CD8-positive, alpha-beta T cell (primary cell): ENCODE measurements at regions of chr6 and their contacts with region 1.

Region 1: DNA sequence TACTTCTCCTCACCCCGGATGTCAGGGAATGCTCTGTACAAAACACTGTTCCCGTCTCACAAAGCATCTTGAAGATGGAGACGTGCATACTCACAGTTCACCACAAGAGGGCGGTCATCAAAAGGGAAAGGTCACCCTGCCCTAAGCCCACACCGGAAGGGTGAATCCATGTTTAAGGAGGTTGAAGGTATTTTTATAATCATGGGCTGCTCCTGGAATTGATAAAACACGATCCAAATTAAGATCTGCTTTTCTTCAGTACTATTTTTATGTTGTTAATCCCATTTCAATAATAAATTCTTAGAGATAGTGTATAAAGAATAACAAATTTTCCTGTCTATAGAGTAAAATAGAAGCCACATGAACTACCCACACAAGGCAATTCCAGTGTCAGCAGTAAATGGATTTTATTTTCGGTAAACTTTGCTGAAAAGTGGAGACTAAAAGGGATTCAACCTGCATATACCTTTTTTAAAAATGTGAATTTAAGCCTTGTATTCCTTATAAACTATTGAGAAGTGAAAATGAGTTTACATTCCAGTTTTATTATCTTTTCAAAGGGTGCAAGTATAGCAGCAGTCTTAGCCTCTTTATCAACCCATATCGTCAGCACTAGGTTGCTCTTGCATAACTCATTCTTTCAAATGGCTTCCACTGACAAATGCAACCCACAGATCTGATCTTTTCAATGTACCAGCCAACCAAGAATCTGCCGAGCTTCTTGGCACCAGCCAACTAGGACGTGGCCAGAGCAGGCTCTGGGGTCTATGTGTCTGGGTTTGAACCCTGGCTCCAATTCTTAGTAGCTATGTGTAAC is 79.7 kb upstream of the MBOAT1 start:
- DNase-seq: peak; percentile 34 to 86 (median 77)
- ATAC-seq: peak; percentile 95
- H3K4me3 ChIP-seq: no peak overlapping the region
- H3K4me3 Mint-ChIP-seq: peak overlapping the region; percentile 26
- H3K27ac ChIP-seq: no peak overlapping the region
- H3K27ac Mint-ChIP-seq: peak overlapping the region; percentile 43
- H3K4me1 ChIP-seq: peaks cover 13% of the 10 kb centered on the region
- H3K4me1 Mint-ChIP-seq: peaks cover 24% of the 10 kb centered on the region
- H3K27me3 ChIP-seq: no peaks in the 10 kb centered on the region
- H3K27me3 Mint-ChIP-seq: no peaks in the 10 kb centered on the region
- CTCF ChIP-seq: peak; percentile 95

Region 2: GRCh38 chr6:20092071-20092566 is 199.9 kb before region 1 on chr6:
- CTCF ChIA-PET with region 1: interaction called, 5 read pairs
- POLR2A ChIA-PET with region 1: no interaction called
- intact Hi-C with region 1: loop called in 1 of 2 experiments (anchors 2 kb)
- DNase-seq: peak in 2 of 9 experiments; percentile 32 to 48
- ATAC-seq: no peak
- H3K4me3 ChIP-seq: no peak overlapping the region
- H3K4me3 Mint-ChIP-seq: no peak overlapping the region
- H3K27ac ChIP-seq: no peak overlapping the region
- H3K27ac Mint-ChIP-seq: no peak overlapping the region
- H3K4me1 ChIP-seq: no peaks in the 10 kb centered on the region
- H3K4me1 Mint-ChIP-seq: no peaks in the 10 kb centered on the region
- H3K27me3 ChIP-seq: no peaks in the 10 kb centered on the region
- H3K27me3 Mint-ChIP-seq: no peaks in the 10 kb centered on the region
- CTCF ChIP-seq: peak; percentile 45

Region 3: DNA sequence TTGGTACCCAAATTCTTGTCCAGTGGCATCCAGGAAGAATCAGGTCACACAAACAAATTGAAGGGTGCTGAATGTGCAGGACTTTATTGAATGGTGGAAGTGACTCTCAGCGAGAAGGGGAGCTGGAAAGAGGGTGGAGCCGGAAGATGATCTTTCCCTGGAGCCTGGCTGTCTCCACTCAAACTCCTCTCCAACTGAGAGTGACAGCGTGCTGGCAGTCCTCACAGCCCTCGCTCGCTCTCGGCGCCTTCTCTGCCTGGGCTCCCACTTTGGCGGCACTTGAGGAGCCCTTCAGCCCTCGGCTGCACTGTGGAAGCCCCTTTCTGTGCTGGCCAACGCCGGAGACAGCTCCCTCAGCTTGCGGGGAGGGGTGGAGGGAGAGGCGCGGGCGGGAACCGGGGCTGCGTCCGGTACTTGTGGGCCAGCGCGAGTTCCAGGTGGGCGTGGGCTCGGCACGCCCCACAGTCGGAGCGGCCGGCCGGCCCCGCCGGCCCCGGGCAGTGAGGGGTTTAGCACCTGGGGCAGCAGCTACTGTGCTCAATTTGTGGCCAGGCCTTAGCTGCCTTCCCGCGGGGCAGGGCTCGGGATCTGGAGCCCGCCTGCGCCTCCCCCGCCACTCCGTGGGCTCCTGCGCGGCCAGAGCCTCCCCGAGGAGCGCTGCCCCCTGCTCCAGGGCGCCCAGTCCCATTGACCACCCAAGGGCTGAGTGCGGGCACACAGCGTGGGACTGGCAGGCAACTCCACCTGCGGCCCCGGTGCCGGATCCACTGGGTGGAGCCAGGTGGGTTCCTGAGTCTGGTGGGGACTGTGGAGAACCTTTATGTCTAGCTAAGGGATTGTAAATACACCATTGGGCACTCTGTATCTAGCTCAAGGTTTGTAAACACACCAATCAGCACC is 53.0 kb before region 1 on chr6:
- CTCF ChIA-PET with region 1: no interaction called
- POLR2A ChIA-PET with region 1: no interaction called
- intact Hi-C with region 1: no loop called
- DNase-seq: no peak
- ATAC-seq: no peak
- H3K4me3 ChIP-seq: no peak overlapping the region
- H3K4me3 Mint-ChIP-seq: no peak overlapping the region
- H3K27ac ChIP-seq: no peak overlapping the region
- H3K27ac Mint-ChIP-seq: no peak overlapping the region
- H3K4me1 ChIP-seq: no peaks in the 10 kb centered on the region
- H3K4me1 Mint-ChIP-seq: peaks cover 13% of the 10 kb centered on the region
- H3K27me3 ChIP-seq: no peaks in the 10 kb centered on the region
- H3K27me3 Mint-ChIP-seq: no peaks in the 10 kb centered on the region
- CTCF ChIP-seq: no peak

Region 4: GRCh38 chr6:20279608-20280287 is 12.2 kb before region 1 on chr6:
- CTCF ChIA-PET with region 1: interaction called, 5 read pairs
- POLR2A ChIA-PET with region 1: interaction called, 12 read pairs
- intact Hi-C with region 1: no loop called
- DNase-seq: no peak
- ATAC-seq: no peak
- H3K4me3 ChIP-seq: no peak overlapping the region
- H3K4me3 Mint-ChIP-seq: no peak overlapping the region
- H3K27ac ChIP-seq: no peak overlapping the region
- H3K27ac Mint-ChIP-seq: no peak overlapping the region
- H3K4me1 ChIP-seq: no peaks in the 10 kb centered on the region
- H3K4me1 Mint-ChIP-seq: no peaks in the 10 kb centered on the region
- H3K27me3 ChIP-seq: no peaks in the 10 kb centered on the region
- H3K27me3 Mint-ChIP-seq: peaks cover 31% of the 10 kb centered on the region
- CTCF ChIP-seq: no peak

Region 5: GRCh38 chr6:20319520-20320357 is 27.8 kb after region 1 on chr6:
- CTCF ChIA-PET with region 1: interaction called, 11 read pairs
- POLR2A ChIA-PET with region 1: interaction called, 10 read pairs
- intact Hi-C with region 1: no loop called
- DNase-seq: peak; percentile 57 to 92 (median 76)
- ATAC-seq: peak; percentile 91
- H3K4me3 ChIP-seq: peak overlapping the region; percentile 46 to 61
- H3K4me3 Mint-ChIP-seq: peak overlapping the region; percentile 93
- H3K27ac ChIP-seq: peak overlapping the region; percentile 78 to 87
- H3K27ac Mint-ChIP-seq: peak overlapping the region; percentile 99
- H3K4me1 ChIP-seq: peaks cover 12% of the 10 kb centered on the region
- H3K4me1 Mint-ChIP-seq: peaks cover 21% of the 10 kb centered on the region
- H3K27me3 ChIP-seq: no peaks in the 10 kb centered on the region
- H3K27me3 Mint-ChIP-seq: no peaks in the 10 kb centered on the region
- CTCF ChIP-seq: no peak

Region 6: GRCh38 chr6:20366091-20366832 is 74.3 kb after region 1 on chr6:
- CTCF ChIA-PET with region 1: interaction called, 3 read pairs
- POLR2A ChIA-PET with region 1: interaction called, 3 read pairs
- intact Hi-C with region 1: loop called in 1 of 2 experiments (anchors 2 kb)
- DNase-seq: peak; percentile 17 to 89 (median 57)
- ATAC-seq: peak; percentile 77
- H3K4me3 ChIP-seq: peak overlapping the region in 1 of 2 experiments; percentile 10
- H3K4me3 Mint-ChIP-seq: peak overlapping the region; percentile 74
- H3K27ac ChIP-seq: peak overlapping the region; percentile 29 to 72
- H3K27ac Mint-ChIP-seq: peak overlapping the region; percentile 96
- H3K4me1 ChIP-seq: peaks cover 61% of the 10 kb centered on the region
- H3K4me1 Mint-ChIP-seq: peaks cover 65% of the 10 kb centered on the region
- H3K27me3 ChIP-seq: no peaks in the 10 kb centered on the region
- H3K27me3 Mint-ChIP-seq: no peaks in the 10 kb centered on the region
- CTCF ChIP-seq: no peak

Region 7: GRCh38 chr6:20455251-20455940 is 163.4 kb after region 1 on chr6:
- CTCF ChIA-PET with region 1: interaction called, 3 read pairs
- POLR2A ChIA-PET with region 1: interaction called, 3 read pairs
- intact Hi-C with region 1: loop called (anchors 2 to 5 kb)
- DNase-seq: no peak
- ATAC-seq: no peak
- H3K4me3 ChIP-seq: no peak overlapping the region
- H3K4me3 Mint-ChIP-seq: no peak overlapping the region
- H3K27ac ChIP-seq: no peak overlapping the region
- H3K27ac Mint-ChIP-seq: no peak overlapping the region
- H3K4me1 ChIP-seq: peaks cover 8% of the 10 kb centered on the region
- H3K4me1 Mint-ChIP-seq: peaks cover 45% of the 10 kb centered on the region
- H3K27me3 ChIP-seq: no peaks in the 10 kb centered on the region
- H3K27me3 Mint-ChIP-seq: no peaks in the 10 kb centered on the region
- CTCF ChIP-seq: no peak

Region 8: GRCh38 chr6:20534295-20535262 is 242.6 kb after region 1 on chr6 and contains the start of gene CDKAL1:
- CTCF ChIA-PET with region 1: interaction called, 18 read pairs
- POLR2A ChIA-PET with region 1: no interaction called
- intact Hi-C with region 1: loop called (anchors 1 kb)
- DNase-seq: peak; percentile 73 to 94 (median 89)
- ATAC-seq: peak; percentile 88
- H3K4me3 ChIP-seq: peak within 1 kb of the TSS; percentile 65 to 74
- H3K4me3 Mint-ChIP-seq: peak within 1 kb of the TSS; percentile 97
- H3K27ac ChIP-seq: peak within 1 kb of the TSS; percentile 71 to 88
- H3K27ac Mint-ChIP-seq: peak within 1 kb of the TSS; percentile 99
- H3K4me1 ChIP-seq: peaks cover 13% of the 10 kb centered on the region
- H3K4me1 Mint-ChIP-seq: peaks cover 46% of the 10 kb centered on the region
- H3K27me3 ChIP-seq: no peaks in the 10 kb centered on the region
- H3K27me3 Mint-ChIP-seq: peaks cover 2% of the 10 kb centered on the region
- CTCF ChIP-seq: no peak
- total RNA-seq, gene CDKAL1: 21.2 to 22.4 TPM